PC-3 (cell line): ENCODE measurements at regions of chr1 and their contacts with region 1.

Region 1: GRCh38 chr1:232166942-232167341 is 463.0 kb downstream of the SIPA1L2 start:
- DNase-seq: no peak
- ATAC-seq: no peak
- H3K4me3 ChIP-seq: no peak overlapping the region
- H3K27ac ChIP-seq: no peak overlapping the region
- H3K4me1 ChIP-seq: peaks cover 29% of the 10 kb centered on the region
- H3K27me3 ChIP-seq: no peaks in the 10 kb centered on the region
- CTCF ChIP-seq: no peak

Region 2: DNA sequence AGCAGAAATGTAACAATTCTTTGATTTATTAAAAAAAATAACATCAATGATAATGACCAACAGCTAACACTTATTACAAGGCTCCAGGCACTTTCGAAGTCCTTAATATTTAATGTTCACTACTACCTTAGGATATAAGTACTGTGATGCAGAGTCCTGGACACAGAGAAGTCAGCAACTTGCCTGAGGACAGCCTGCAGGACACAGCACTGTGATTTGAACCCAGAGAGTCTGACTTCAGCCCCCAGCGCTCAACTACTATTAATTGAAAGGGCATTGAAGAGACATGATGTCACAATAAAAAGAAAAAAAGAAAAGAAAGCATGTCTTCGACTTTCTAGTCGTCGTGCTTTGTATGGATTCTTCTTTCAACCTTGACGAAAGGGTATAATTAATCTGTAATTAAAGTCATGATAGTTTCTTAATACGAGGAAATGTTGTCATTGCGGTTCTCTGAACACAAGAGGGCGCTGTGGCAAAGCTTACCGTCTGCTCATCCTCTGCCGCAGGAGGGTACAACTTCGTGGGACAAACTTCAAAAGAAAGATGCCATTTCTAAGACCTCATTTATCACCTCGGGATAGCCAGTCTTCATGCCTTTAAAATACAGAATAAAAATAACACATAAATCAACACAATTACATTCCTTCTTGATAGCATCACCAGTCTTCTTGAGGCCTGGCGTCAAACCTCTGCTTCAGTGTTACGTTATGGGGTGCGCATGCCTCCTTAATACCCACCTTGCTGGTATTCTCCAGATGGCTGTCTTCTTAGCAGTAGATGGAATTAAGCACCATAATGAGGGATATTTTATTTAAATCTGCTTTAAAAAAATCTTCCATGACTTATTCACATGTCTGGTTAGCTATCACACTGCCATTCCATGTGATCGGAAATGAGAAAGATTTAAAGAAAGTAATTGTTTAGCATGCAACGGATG is 300.3 kb before region 1 on chr1:
- CTCF ChIA-PET with region 1: no interaction called
- POLR2A ChIA-PET with region 1: no interaction called
- intact Hi-C with region 1: loop called (anchors 5 kb)
- DNase-seq: peak; percentile 79
- ATAC-seq: peak; percentile 67
- H3K4me3 ChIP-seq: no peak overlapping the region
- H3K27ac ChIP-seq: no peak overlapping the region
- H3K4me1 ChIP-seq: peaks cover 5% of the 10 kb centered on the region; the same call in 1 of the 2 replicates
- H3K27me3 ChIP-seq: no peaks in the 10 kb centered on the region
- CTCF ChIP-seq: peak; percentile 99

Region 3: DNA sequence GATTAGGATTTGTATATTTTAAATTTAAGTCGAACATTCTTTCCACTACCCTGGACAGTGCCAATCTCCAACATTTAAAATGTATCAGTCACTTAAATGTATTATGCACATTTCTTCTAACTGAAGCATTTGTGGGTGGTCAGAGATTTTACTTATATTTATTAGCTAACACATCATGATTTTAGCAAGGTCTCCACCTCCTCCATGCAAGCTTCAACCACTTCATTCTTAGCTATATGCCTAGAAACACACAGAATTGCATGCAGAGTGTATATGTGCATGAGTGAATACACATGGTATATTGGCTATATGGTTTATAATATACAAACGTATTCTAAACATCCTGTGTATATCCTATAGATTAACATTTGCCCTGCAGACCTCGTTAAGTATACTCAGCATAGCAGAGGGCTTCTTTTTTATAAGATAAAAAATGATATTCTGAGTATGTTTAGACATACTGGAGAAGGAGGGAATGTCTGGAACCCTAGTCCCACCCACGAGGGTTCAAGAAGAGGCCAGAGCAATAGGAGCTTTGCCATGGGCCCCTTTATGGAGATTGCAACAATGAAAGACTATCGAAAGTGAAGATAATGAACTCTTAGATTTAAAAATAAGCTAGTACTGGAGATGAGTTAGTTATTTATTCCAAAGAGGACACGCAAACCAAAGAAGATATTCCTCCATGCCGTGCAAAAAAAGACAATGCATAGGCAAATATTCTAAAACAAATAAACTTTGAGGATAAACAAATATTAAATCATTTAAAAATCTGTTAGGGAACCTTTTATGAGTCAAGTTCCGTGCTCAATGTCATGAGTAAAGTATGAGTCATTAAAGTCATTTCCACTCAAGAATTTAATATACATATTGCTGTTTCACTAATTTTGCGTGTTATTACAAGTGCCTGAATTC is 17.4 kb before region 1 on chr1:
- CTCF ChIA-PET with region 1: no interaction called
- POLR2A ChIA-PET with region 1: no interaction called
- intact Hi-C with region 1: loop called (anchors 1 kb)
- DNase-seq: peak; percentile 90
- ATAC-seq: peak; percentile 80
- H3K4me3 ChIP-seq: peak overlapping the region; percentile 31
- H3K27ac ChIP-seq: peak overlapping the region; percentile 95
- H3K4me1 ChIP-seq: peaks cover 28% of the 10 kb centered on the region
- H3K27me3 ChIP-seq: no peaks in the 10 kb centered on the region
- CTCF ChIP-seq: no peak

Region 4: GRCh38 chr1:232422901-232423300 is 256.0 kb after region 1 on chr1:
- CTCF ChIA-PET with region 1: no interaction called
- POLR2A ChIA-PET with region 1: no interaction called
- intact Hi-C with region 1: loop called (anchors 2 kb)
- DNase-seq: peak; percentile 76
- ATAC-seq: peak; percentile 32
- H3K4me3 ChIP-seq: peak overlapping the region; percentile 5; the same call in 1 of the 2 replicates
- H3K27ac ChIP-seq: peak overlapping the region; percentile 86
- H3K4me1 ChIP-seq: peaks cover 49% of the 10 kb centered on the region
- H3K27me3 ChIP-seq: no peaks in the 10 kb centered on the region
- CTCF ChIP-seq: no peak